GM12878 (cell line): ENCODE measurements at regions of chr22 and their contacts with region 1.

Region 1: DNA sequence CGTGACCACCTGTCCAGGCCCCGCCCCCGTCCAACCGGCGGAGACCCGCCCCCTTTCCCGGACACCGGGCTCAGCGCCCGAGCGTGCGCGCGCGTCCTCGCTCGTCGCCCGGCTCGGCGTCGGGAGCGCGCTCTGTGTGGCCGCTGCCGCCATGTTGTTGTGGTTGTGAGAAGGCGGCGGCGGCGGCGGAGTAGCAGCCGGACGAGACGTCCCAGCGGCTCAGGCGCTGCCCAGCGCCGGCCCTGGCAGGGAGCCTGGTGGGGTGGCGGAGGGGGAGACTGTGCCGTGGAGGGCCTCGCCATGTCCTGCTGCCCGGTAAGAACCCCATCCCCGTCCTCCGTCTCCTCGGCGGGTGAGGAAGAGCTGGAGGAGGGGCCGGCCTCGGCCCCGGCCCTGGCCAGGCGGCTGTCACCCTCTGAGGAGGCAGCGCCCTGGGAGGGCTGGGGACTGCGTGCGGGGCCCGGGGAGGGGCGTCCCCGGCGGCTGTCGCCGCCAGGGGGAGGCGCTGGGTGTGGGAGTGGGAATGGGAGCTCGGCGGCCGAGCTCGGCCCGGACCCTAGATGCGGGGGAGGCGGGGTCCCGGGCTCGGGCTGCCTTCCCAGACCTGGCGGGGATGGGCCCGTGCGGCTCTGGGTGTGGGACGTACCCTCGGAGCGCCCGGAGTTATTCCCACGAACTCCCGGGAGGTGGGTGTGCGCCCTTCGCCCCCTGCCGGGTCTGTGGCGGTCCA is at the start of gene MTMR3:
- DNase-seq: peak; percentile 49
- ATAC-seq: peak; percentile 92
- H3K4me3 ChIP-seq: peak within 1 kb of the TSS; percentile 70
- H3K27ac ChIP-seq: peak within 1 kb of the TSS; percentile 77
- H3K4me1 ChIP-seq: no peaks in the 10 kb centered on the region
- H3K27me3 ChIP-seq: no peaks in the 10 kb centered on the region
- CTCF ChIP-seq: peak; percentile 15 to 29 (median 21); a peak in 4 of 6 replicates
- EP300 ChIP-seq: no peak
- POLR2A ChIP-seq: peak; percentile 84
- RAD21 ChIP-seq: peak; percentile 24; the same call in 1 of the 2 replicates
- polyA plus RNA-seq, gene MTMR3: 1.4 to 1.9 TPM

Region 2: GRCh38 chr22:29979777-29980321 is 96.6 kb after region 1 on chr22:
- CTCF ChIA-PET with region 1: no interaction called
- POLR2A ChIA-PET with region 1: no interaction called
- RAD21 ChIA-PET with region 1: no interaction called
- SMC1A ChIA-PET with region 1: no interaction called
- in situ Hi-C with region 1: no loop called
- intact Hi-C with region 1: loop called (anchors 10 kb)
- DNase-seq: peak; percentile 4
- ATAC-seq: peak; percentile 91
- H3K4me3 ChIP-seq: no peak overlapping the region
- H3K27ac ChIP-seq: no peak overlapping the region
- H3K4me1 ChIP-seq: no peaks in the 10 kb centered on the region
- H3K27me3 ChIP-seq: no peaks in the 10 kb centered on the region
- CTCF ChIP-seq: no peak
- EP300 ChIP-seq: no peak
- POLR2A ChIP-seq: no peak
- RAD21 ChIP-seq: no peak

Region 3: DNA sequence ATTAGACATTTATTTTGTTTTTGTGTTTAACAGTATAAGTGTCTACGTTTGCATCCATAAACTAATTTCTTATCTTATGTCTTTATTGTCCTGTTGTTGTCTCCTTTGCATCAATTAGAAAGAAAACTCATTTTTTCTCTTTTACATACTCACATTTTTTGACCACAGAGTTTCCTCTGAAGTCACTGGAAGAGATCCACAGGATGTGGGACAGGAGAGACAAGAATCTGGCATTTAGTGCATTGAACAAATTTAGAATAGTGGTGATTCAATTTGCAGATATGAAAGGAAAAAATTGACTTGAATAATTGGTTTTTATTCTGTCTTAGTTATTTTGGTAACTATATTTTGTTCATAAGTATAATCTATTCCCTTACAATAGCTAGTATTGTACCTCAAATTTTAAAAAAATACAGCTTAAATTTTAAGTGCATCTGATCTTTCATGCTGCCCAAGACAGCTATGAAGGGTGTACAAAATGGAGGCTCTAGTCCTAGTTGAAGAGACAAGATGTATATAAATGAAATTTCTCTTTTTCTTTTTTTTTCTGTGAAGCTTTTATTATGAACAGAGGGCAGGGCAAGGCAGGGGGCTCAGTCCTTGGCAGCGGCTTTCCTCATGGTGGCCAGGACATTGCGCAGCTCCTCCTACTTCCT is 221.4 kb after region 1 on chr22:
- CTCF ChIA-PET with region 1: no interaction called
- POLR2A ChIA-PET with region 1: no interaction called
- RAD21 ChIA-PET with region 1: no interaction called
- SMC1A ChIA-PET with region 1: no interaction called
- in situ Hi-C with region 1: no loop called
- intact Hi-C with region 1: no loop called
- DNase-seq: no peak
- ATAC-seq: no peak
- H3K4me3 ChIP-seq: no peak overlapping the region
- H3K27ac ChIP-seq: no peak overlapping the region
- H3K4me1 ChIP-seq: no peaks in the 10 kb centered on the region
- H3K27me3 ChIP-seq: no peaks in the 10 kb centered on the region
- CTCF ChIP-seq: no peak
- EP300 ChIP-seq: no peak
- POLR2A ChIP-seq: no peak
- RAD21 ChIP-seq: no peak